Naive thymus-derived CD4-positive, alpha-beta T cell (primary cell): ENCODE measurements at regions of chr20 and their contacts with region 1.

Region 1: GRCh38 chr20:1377984-1378734 is 14.7 kb downstream of the FKBP1A start:
- DNase-seq: no peak
- ATAC-seq: no peak
- H3K4me3 ChIP-seq: no peak overlapping the region
- H3K4me3 Mint-ChIP-seq: peak overlapping the region in 8 of 10 donors; percentile 21 to 61 (median 46)
- H3K27ac ChIP-seq: peak overlapping the region; percentile 14
- H3K27ac Mint-ChIP-seq: peak overlapping the region; percentile 42 to 83 (median 65)
- H3K4me1 ChIP-seq: peaks cover 18 to 62% of the 10 kb centered on the region in 2 donors
- H3K4me1 Mint-ChIP-seq: peaks cover 73 to 97% (median 94%) of the 10 kb centered on the region in 7 donors
- H3K27me3 ChIP-seq: no peaks in the 10 kb centered on the region
- H3K27me3 Mint-ChIP-seq: no peaks in the 10 kb centered on the region

Region 2: GRCh38 chr20:1171461-1172093 is 206.6 kb before region 1 on chr20:
- CTCF ChIA-PET with region 1: no interaction called
- POLR2A ChIA-PET with region 1: no interaction called
- intact Hi-C with region 1: no loop called
- DNase-seq: peak in 1 of 9 donors; percentile 16
- ATAC-seq: no peak
- H3K4me3 ChIP-seq: no peak overlapping the region
- H3K4me3 Mint-ChIP-seq: no peak overlapping the region
- H3K27ac ChIP-seq: no peak overlapping the region
- H3K27ac Mint-ChIP-seq: no peak overlapping the region
- H3K4me1 ChIP-seq: no peaks in the 10 kb centered on the region
- H3K4me1 Mint-ChIP-seq: peaks cover 0 to 5% (median 0%) of the 10 kb centered on the region in 7 donors
- H3K27me3 ChIP-seq: no peaks in the 10 kb centered on the region
- H3K27me3 Mint-ChIP-seq: no peaks in the 10 kb centered on the region

Region 3: GRCh38 chr20:1367479-1367878 is 10.7 kb before region 1 on chr20:
- CTCF ChIA-PET with region 1: no interaction called
- POLR2A ChIA-PET with region 1: interaction called, 3 read pairs
- intact Hi-C with region 1: loop called in 1 of 2 experiments (anchors 2 kb)
- DNase-seq: no peak
- ATAC-seq: no peak
- H3K4me3 ChIP-seq: no peak overlapping the region
- H3K4me3 Mint-ChIP-seq: no peak overlapping the region
- H3K27ac ChIP-seq: no peak overlapping the region
- H3K27ac Mint-ChIP-seq: peak overlapping the region in 4 of 9 donors; percentile 4 to 53 (median 31)
- H3K4me1 ChIP-seq: peaks cover 11 to 31% of the 10 kb centered on the region in 2 donors
- H3K4me1 Mint-ChIP-seq: peaks cover 30 to 60% (median 46%) of the 10 kb centered on the region in 7 donors
- H3K27me3 ChIP-seq: no peaks in the 10 kb centered on the region
- H3K27me3 Mint-ChIP-seq: no peaks in the 10 kb centered on the region